Caco-2 (cell line): ENCODE measurements at regions of chr6 and their contacts with region 1.

Region 1: DNA sequence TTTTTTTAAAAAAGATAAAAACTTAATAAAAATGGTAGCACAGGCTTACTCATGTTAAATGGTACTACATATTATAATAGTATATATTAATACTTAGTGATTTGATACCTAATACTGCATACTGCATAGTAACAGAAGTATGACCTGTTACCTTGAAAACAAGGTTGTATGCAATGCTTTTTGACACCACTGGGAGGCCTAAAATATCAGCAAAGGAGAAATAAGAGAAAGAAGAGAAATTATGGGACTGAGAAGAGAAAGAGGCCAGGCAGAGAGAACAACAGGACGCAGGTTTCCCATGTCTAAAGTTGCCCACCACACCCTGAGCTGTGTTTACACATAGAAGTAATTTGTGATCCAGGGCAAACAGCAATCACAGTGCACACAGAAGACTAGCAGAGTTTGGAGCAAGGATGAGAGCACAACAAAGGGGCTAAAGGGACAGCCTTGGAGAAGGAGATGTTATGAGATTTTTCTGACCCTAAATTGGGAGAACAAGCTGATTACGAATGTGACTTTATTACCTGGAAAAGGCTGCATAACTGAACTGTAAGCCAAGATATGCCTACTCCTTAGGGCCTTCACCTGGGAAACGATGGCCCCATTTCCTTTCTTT is 73.2 kb downstream of the ROS1 start:
- DNase-seq: peak in 1 of 2 experiments; percentile 29
- H3K4me3 ChIP-seq: no peak overlapping the region
- H3K4me3 Mint-ChIP-seq: no peak overlapping the region
- H3K27ac Mint-ChIP-seq: no peak overlapping the region
- H3K4me1 ChIP-seq: no peaks in the 10 kb centered on the region
- H3K4me1 Mint-ChIP-seq: peaks cover 7% of the 10 kb centered on the region
- H3K27me3 ChIP-seq: no peaks in the 10 kb centered on the region
- H3K27me3 Mint-ChIP-seq: peaks cover 6% of the 10 kb centered on the region
- CTCF ChIP-seq: peak; percentile 60

Region 2: DNA sequence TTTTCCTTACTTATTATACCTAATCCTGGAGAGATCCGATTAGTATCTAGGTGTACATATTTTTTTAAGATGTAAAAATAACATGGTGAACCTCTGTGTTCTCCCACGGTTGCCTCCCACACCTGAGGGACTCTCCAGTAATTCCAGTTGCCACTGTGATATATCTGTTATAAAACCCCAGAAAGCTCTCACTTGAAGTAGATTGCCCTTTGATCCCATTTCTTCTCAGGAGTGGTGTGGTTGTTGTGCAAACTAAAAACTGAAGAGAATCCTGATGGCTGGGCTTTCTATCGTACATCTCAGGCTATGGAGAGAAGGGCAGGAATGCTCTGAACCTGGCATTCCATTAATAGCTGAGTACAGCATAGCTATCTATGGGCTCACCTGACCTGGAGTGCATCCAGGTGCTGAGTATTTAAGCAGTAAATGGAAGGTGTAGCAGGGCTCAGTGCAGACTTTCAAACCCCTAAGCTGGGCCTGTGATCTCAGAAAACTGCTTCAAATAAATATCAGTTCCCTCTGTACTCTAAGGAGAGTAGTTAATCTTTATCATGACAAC is 46.3 kb before region 1 on chr6:
- CTCF ChIA-PET with region 1: no interaction called
- POLR2A ChIA-PET with region 1: no interaction called
- intact Hi-C with region 1: no loop called
- DNase-seq: peak; percentile 8 to 36
- H3K4me3 ChIP-seq: no peak overlapping the region
- H3K4me3 Mint-ChIP-seq: no peak overlapping the region
- H3K27ac Mint-ChIP-seq: no peak overlapping the region
- H3K4me1 ChIP-seq: no peaks in the 10 kb centered on the region
- H3K4me1 Mint-ChIP-seq: no peaks in the 10 kb centered on the region
- H3K27me3 ChIP-seq: no peaks in the 10 kb centered on the region; the same call in 1 of the 2 replicates
- H3K27me3 Mint-ChIP-seq: peaks cover 4% of the 10 kb centered on the region
- CTCF ChIP-seq: no peak

Region 3: DNA sequence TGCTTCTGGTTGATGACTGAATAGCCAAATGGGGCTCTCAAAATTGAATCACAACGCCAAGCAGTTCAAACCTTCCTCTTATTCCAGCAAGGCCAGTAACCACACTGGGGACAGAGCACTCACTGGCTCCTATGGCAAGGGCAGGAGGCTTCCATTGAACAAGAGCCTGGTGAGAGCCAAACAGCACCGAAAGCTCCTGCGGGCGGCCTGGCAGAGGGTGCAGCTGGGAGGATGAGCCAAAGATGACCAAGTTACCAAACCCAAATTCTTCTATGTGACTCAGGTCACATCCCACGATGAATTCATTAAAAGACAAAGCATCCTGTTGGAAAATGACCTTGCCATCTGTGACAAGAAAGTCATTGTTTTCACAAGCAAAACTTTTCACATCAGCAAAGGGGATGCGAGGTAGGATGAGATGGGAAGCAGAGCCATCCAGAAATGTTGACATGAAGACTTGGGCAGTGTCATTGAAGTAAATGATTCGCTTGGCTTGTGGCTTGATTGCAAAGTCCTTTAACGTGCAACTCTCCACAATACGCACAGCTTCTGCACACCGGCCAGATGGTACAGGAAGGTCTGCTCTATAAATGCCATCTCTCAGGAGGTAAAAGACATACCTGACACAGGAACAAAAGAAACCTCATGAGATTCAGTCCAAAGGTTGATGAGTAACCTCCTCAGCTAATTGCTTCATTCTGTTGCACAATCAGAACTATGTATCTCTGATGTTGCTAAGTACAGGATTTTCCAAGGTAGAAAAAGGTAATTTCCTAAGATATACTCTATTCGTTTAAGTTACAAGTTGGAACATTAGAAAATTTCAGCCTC is 36.9 kb after region 1 on chr6:
- CTCF ChIA-PET with region 1: no interaction called
- POLR2A ChIA-PET with region 1: no interaction called
- intact Hi-C with region 1: loop called (anchors 5 kb)
- DNase-seq: peak; percentile 70
- H3K4me3 ChIP-seq: no peak overlapping the region
- H3K4me3 Mint-ChIP-seq: peak overlapping the region; percentile 11
- H3K27ac Mint-ChIP-seq: peak overlapping the region; percentile 32
- H3K4me1 ChIP-seq: peaks cover 25% of the 10 kb centered on the region
- H3K4me1 Mint-ChIP-seq: no peaks in the 10 kb centered on the region
- H3K27me3 ChIP-seq: no peaks in the 10 kb centered on the region
- H3K27me3 Mint-ChIP-seq: no peaks in the 10 kb centered on the region
- CTCF ChIP-seq: no peak

Region 4: DNA sequence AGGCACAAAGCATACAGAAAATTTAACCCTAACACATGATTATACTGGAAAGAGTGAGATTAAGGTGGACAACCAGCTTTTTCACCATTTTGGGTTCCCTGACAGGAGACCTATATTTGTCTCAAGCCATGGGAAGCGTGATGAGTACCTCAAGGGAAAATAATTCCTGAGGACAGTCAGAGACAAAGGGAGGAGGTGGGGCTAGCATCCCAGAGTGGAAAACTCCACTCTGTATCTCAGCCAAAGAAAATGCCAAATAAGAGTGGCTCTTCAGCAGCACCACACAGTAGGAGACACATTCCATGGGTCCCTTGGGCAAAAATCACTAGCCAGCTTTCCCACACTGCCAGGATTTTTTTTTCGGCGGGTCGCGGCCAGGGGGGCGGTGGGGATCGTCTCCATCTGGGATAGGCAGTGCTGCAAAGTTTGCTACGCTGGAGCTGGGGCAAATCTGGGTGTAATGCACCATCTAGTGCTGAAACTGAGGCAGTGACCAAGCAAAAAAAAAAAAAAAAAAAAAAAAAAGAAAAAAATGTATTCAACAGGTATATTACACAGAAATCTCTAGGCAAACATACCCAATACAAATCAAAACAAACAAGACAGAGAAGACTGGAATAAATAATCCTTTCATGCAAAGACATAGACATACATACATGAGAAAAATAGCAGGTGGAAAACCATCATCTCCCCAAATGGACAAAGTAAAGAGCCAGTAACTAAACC is 477.2 kb after region 1 on chr6:
- CTCF ChIA-PET with region 1: no interaction called
- POLR2A ChIA-PET with region 1: no interaction called
- intact Hi-C with region 1: loop called (anchors 1 kb)
- DNase-seq: peak in 1 of 2 experiments; percentile 41
- H3K4me3 ChIP-seq: peak overlapping the region; percentile 9; the same call in 1 of the 2 replicates
- H3K4me3 Mint-ChIP-seq: peak overlapping the region; percentile 62
- H3K27ac Mint-ChIP-seq: no peak overlapping the region
- H3K4me1 ChIP-seq: no peaks in the 10 kb centered on the region
- H3K4me1 Mint-ChIP-seq: no peaks in the 10 kb centered on the region
- H3K27me3 ChIP-seq: no peaks in the 10 kb centered on the region
- H3K27me3 Mint-ChIP-seq: peaks cover 5% of the 10 kb centered on the region
- CTCF ChIP-seq: peak; percentile 52 to 56